ENCODE measurements at regions of chr12 and their contacts with region 1.

Region 1: GRCh38 chr12:106149096-106149784 is 10.5 kb upstream of the NUAK1 start:
- DNase-seq: no peak
- ATAC-seq: peak; percentile 82
- H3K4me3 Mint-ChIP-seq: no peak overlapping the region
- H3K27ac Mint-ChIP-seq: no peak overlapping the region
- H3K4me1 Mint-ChIP-seq: peaks cover 24% of the 10 kb centered on the region
- H3K27me3 Mint-ChIP-seq: no peaks in the 10 kb centered on the region
- CTCF ChIP-seq: 0 out of 2 replicates have a peak, but pooled peaks have one; percentile 18

Region 2: DNA sequence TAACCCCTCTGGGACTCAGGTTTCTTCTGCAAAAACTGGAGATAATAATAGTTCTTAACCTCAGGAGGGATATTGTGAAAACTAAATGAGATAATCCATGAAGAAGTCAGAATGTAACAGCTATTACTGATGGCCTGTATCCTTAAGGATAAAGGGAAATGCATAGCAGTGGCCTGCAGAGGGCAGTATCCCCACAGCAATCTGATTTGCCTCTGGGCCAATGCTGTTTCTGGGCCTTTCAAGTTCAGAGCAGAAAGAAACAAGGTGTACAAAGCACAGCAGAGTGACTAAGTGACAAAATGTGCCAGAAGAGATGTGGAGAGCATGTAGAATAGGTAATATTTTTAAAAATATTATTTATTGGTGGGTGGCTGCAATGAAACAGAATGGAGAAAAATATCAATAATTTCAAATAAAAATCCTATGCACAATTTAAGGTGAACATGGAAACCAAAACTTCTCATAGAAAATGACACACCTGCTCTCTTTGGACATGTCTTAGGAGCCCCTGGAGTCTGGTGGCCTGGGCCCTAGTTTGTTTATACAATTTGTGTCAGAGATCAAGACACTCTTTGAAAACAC is 728.5 kb before region 1 on chr12:
- CTCF ChIA-PET with region 1: interaction called, 18 read pairs
- POLR2A ChIA-PET with region 1: no interaction called
- DNase-seq: peak; percentile 82
- ATAC-seq: peak; percentile 70
- H3K4me3 Mint-ChIP-seq: no peak overlapping the region
- H3K27ac Mint-ChIP-seq: no peak overlapping the region
- H3K4me1 Mint-ChIP-seq: no peaks in the 10 kb centered on the region
- H3K27me3 Mint-ChIP-seq: no peaks in the 10 kb centered on the region
- CTCF ChIP-seq: peak; percentile 85

Region 3: GRCh38 chr12:105705765-105706164 is 443.5 kb before region 1 on chr12:
- CTCF ChIA-PET with region 1: interaction called, 10 read pairs
- POLR2A ChIA-PET with region 1: no interaction called
- DNase-seq: peak; percentile 67
- ATAC-seq: peak; percentile 57; the same call in 1 of the 2 replicates
- H3K4me3 Mint-ChIP-seq: no peak overlapping the region
- H3K27ac Mint-ChIP-seq: no peak overlapping the region; the same call in 1 of the 2 replicates
- H3K4me1 Mint-ChIP-seq: peaks cover 35% of the 10 kb centered on the region
- H3K27me3 Mint-ChIP-seq: peaks cover 4% of the 10 kb centered on the region; the same call in 1 of the 2 replicates
- CTCF ChIP-seq: peak; percentile 68

Region 4: DNA sequence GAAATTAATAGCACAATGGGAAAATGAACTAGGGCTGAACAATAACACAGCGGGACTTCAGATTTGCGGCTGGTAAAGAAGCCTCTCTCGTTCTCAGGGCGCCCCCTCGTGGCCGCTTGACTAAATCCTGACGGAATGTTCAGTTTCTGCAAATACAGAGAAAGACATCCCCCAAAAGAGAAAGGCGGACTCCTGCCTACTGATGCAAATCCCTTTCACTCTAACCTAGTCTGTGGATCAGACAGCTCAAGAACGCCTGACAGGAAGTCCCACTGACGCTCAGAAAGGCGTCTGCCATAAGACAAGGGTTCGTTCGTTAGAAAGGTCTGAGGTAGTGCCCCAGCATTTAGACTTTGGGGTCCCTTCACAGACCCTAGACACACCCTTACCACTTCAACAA is 13.0 kb before region 1 on chr12:
- CTCF ChIA-PET with region 1: interaction called, 36 read pairs
- POLR2A ChIA-PET with region 1: interaction called, 8 read pairs
- DNase-seq: peak; percentile 92
- ATAC-seq: no peak
- H3K4me3 Mint-ChIP-seq: peak overlapping the region; percentile 92
- H3K27ac Mint-ChIP-seq: peak overlapping the region; percentile 76
- H3K4me1 Mint-ChIP-seq: peaks cover 74% of the 10 kb centered on the region
- H3K27me3 Mint-ChIP-seq: peaks cover 7% of the 10 kb centered on the region
- CTCF ChIP-seq: peak; percentile 79

Region 5: DNA sequence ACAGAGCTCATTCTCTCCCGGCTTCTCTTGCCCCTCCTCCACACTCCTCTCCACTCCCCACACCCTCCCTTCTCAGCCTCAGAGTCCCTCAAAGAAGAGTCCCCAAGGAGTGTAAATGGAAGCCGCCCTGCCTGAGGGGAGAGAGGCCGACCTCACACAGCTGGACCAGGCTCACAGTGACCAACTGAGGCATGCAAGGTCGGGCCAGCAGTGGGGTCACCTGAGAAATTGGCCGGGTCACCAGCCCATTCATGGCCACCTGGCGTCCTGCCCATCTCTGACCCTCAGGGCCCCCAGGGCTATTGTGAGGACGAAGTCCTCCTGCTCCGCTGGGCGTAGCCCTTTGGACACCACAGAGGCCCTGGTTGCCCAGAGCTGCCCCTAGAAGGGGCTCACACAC is 39.0 kb after region 1 on chr12:
- CTCF ChIA-PET with region 1: interaction called, 11 read pairs
- POLR2A ChIA-PET with region 1: no interaction called
- DNase-seq: no peak
- ATAC-seq: peak; percentile 69
- H3K4me3 Mint-ChIP-seq: no peak overlapping the region
- H3K27ac Mint-ChIP-seq: no peak overlapping the region
- H3K4me1 Mint-ChIP-seq: peaks cover 17% of the 10 kb centered on the region
- H3K27me3 Mint-ChIP-seq: no peaks in the 10 kb centered on the region; the same call in 1 of the 2 replicates
- CTCF ChIP-seq: no peak